RWPE1 (cell line): ENCODE measurements at regions of chr10 and their contacts with region 1.

Region 1: DNA sequence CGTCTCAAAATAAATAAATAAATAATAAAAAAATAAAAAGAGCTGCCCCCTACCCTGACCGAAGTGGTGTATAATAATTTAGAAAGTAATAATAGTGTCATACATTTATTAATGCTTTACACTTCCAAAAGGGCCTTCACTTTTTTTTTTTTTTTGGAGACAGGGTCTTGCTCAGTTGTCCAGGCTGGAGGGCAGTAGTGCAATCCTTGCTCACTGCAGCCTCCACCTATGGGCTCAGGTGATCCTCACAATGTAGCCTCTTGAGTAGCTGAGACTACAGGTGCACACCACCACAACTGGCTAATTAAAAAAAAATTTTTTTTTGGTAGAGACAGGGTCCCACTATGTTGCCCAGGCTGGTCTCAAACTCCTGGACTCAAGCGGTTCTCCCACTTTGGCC is 1.4 kb downstream of the FAM149B1 start:
- DNase-seq: no peak
- H3K27ac ChIP-seq: peak overlapping the region; percentile 94
- CTCF ChIP-seq: no peak

Region 2: GRCh38 chr10:73159038-73159648 is 10.2 kb before region 1 on chr10:
- CTCF ChIA-PET with region 1: interaction called, 12 read pairs
- POLR2A ChIA-PET with region 1: no interaction called
- DNase-seq: peak; percentile 51
- H3K27ac ChIP-seq: no peak overlapping the region
- CTCF ChIP-seq: peak; percentile 80